Caco-2 (cell line): ENCODE measurements at regions of chr3 and their contacts with region 1.

Region 1: DNA sequence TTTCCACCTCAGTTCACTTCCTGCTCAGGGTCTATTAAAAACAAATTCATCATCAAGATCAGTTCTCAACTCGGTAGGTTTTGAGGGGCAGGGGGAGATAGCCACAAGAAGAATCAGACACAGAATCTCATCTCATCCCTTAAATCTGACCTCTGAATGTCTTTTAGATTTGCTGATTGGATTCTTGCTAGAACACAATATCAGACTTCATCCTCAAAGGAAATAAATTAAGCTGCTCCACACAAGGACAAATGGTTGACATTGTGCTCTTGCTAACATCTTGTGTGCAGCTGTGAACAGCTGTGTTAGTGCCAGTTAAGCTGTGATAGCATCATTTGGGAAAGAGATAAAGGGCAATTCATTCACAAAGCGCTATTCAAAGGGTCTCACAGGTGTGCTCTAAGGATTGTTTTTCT is 184.0 kb upstream of the ADAMTS9 start:
- DNase-seq: no peak
- H3K4me3 ChIP-seq: no peak overlapping the region
- H3K4me3 Mint-ChIP-seq: no peak overlapping the region
- H3K27ac Mint-ChIP-seq: no peak overlapping the region
- H3K4me1 ChIP-seq: no peaks in the 10 kb centered on the region
- H3K4me1 Mint-ChIP-seq: no peaks in the 10 kb centered on the region
- H3K27me3 ChIP-seq: no peaks in the 10 kb centered on the region
- H3K27me3 Mint-ChIP-seq: no peaks in the 10 kb centered on the region
- CTCF ChIP-seq: no peak

Region 2: GRCh38 chr3:64739971-64740631 is 131.7 kb before region 1 on chr3:
- CTCF ChIA-PET with region 1: interaction called, 10 read pairs
- POLR2A ChIA-PET with region 1: no interaction called
- intact Hi-C with region 1: no loop called
- DNase-seq: peak in 1 of 2 experiments; percentile 2
- H3K4me3 ChIP-seq: no peak overlapping the region
- H3K4me3 Mint-ChIP-seq: no peak overlapping the region
- H3K27ac Mint-ChIP-seq: peak overlapping the region; percentile 15
- H3K4me1 ChIP-seq: no peaks in the 10 kb centered on the region
- H3K4me1 Mint-ChIP-seq: peaks cover 13% of the 10 kb centered on the region
- H3K27me3 ChIP-seq: no peaks in the 10 kb centered on the region
- H3K27me3 Mint-ChIP-seq: no peaks in the 10 kb centered on the region
- CTCF ChIP-seq: no peak

Region 3: DNA sequence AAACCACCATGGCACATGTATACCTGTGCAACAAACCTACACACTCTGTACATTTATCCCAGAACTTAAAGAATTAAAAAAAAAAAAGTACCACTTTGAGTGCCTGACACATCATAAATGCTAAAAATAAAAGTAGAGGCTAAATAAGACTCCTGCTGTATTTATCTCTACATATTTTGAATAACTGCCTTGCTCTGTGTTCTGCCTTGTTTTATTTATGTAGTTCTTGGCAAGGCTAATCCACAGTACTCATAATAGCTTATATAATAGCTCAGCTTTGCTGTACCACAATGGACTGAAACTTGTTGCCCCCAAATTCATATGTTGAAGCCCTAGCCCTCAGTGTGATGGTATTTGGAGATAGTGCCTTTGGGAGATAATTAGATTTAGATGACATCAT is 88.6 kb before region 1 on chr3:
- CTCF ChIA-PET with region 1: no interaction called
- POLR2A ChIA-PET with region 1: no interaction called
- intact Hi-C with region 1: no loop called
- DNase-seq: no peak
- H3K4me3 ChIP-seq: no peak overlapping the region
- H3K4me3 Mint-ChIP-seq: no peak overlapping the region
- H3K27ac Mint-ChIP-seq: no peak overlapping the region
- H3K4me1 ChIP-seq: no peaks in the 10 kb centered on the region
- H3K4me1 Mint-ChIP-seq: no peaks in the 10 kb centered on the region
- H3K27me3 ChIP-seq: no peaks in the 10 kb centered on the region
- H3K27me3 Mint-ChIP-seq: no peaks in the 10 kb centered on the region
- CTCF ChIP-seq: no peak

Region 4: GRCh38 chr3:64890006-64890405 is 18.2 kb after region 1 on chr3:
- CTCF ChIA-PET with region 1: no interaction called
- POLR2A ChIA-PET with region 1: no interaction called
- intact Hi-C with region 1: no loop called
- DNase-seq: no peak
- H3K4me3 ChIP-seq: no peak overlapping the region
- H3K4me3 Mint-ChIP-seq: no peak overlapping the region
- H3K27ac Mint-ChIP-seq: no peak overlapping the region
- H3K4me1 ChIP-seq: no peaks in the 10 kb centered on the region
- H3K4me1 Mint-ChIP-seq: no peaks in the 10 kb centered on the region
- H3K27me3 ChIP-seq: no peaks in the 10 kb centered on the region
- H3K27me3 Mint-ChIP-seq: no peaks in the 10 kb centered on the region
- CTCF ChIP-seq: no peak